Activated B cell treated with CpG ODN at 0.5 μM for 24 hours (primary cell): ENCODE measurements at regions of chr18 and their contacts with region 1.

Region 1: GRCh38 chr18:76450452-76451395 is 44.3 kb downstream of the ZNF516 start:
- DNase-seq: no peak
- ATAC-seq: peak; percentile 25
- H3K4me3 Mint-ChIP-seq: peak overlapping the region; percentile 90
- H3K27ac Mint-ChIP-seq: peak overlapping the region; percentile 21
- H3K4me1 Mint-ChIP-seq: peaks cover 40% of the 10 kb centered on the region
- H3K27me3 Mint-ChIP-seq: no peaks in the 10 kb centered on the region
- CTCF ChIP-seq: no peak

Region 2: GRCh38 chr18:76518123-76518859 is 67.6 kb after region 1 on chr18:
- CTCF ChIA-PET with region 1: no interaction called
- POLR2A ChIA-PET with region 1: no interaction called
- intact Hi-C with region 1: loop called (anchors 5 kb)
- DNase-seq: peak; percentile 17
- ATAC-seq: no peak
- H3K4me3 Mint-ChIP-seq: peak overlapping the region; percentile 75
- H3K27ac Mint-ChIP-seq: no peak overlapping the region
- H3K4me1 Mint-ChIP-seq: peaks cover 17% of the 10 kb centered on the region
- H3K27me3 Mint-ChIP-seq: peaks cover 14% of the 10 kb centered on the region
- CTCF ChIP-seq: no peak

Region 3: GRCh38 chr18:76588601-76589226 is 138.0 kb after region 1 on chr18:
- CTCF ChIA-PET with region 1: no interaction called
- POLR2A ChIA-PET with region 1: no interaction called
- intact Hi-C with region 1: loop called (anchors 10 kb)
- DNase-seq: no peak
- ATAC-seq: no peak
- H3K4me3 Mint-ChIP-seq: peak overlapping the region; percentile 24
- H3K27ac Mint-ChIP-seq: no peak overlapping the region
- H3K4me1 Mint-ChIP-seq: peaks cover 5% of the 10 kb centered on the region
- H3K27me3 Mint-ChIP-seq: peaks cover 33% of the 10 kb centered on the region
- CTCF ChIP-seq: no peak